PC-3 (cell line): ENCODE measurements at regions of chrX and their contacts with region 1.

Region 1: DNA sequence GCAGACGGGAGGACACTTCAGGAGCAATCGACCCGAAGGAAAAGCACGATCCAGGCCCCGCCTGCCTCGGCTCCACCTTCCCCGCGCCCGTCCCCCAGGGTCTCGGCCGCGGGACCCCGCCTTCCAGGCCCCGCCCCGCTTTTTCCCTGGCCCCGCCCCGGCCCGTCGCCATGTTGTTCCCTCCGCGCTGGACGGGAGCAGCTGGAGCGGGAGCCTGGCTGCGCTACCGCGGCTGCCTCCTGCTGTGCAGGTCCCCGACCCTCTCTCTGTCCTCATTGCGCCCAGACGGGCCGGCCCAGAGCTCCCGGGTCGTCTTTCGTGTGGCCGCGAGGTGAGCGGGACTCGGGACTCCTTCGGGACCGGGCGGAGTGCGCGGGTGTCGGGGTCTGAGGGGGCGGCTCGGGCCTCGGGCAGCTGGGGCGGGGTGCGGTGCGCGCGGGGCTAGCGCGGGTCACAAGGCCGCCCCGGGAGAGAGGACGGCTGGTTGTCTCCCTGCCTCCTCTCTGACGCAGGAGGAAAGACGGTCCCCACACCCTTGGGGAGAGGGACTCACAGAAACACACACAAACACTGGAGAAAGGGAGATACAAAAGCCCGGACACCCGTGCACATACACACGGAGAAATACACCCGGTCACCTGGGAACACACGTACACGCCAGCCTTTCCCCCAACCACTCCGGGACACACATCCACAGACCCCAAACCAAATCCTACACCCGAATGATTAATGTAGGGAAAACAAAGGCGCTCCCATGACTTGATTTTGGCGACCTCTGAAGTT is at the start of gene RAB9A:
- DNase-seq: peak; percentile 76
- ATAC-seq: peak; percentile 83
- H3K4me3 ChIP-seq: peak within 1 kb of the TSS; percentile 99
- H3K27ac ChIP-seq: peak within 1 kb of the TSS; percentile 76
- H3K4me1 ChIP-seq: peaks cover 29% of the 10 kb centered on the region
- H3K27me3 ChIP-seq: no peaks in the 10 kb centered on the region
- CTCF ChIP-seq: no peak
- total RNA-seq, gene RAB9A: 21.0 and 29.5 TPM in 2 replicates

Region 2: GRCh38 chrX:13658602-13659001 is 30.5 kb before region 1 on chrX:
- CTCF ChIA-PET with region 1: no interaction called
- POLR2A ChIA-PET with region 1: no interaction called
- intact Hi-C with region 1: loop called (anchors 1 kb)
- DNase-seq: peak; percentile 75
- ATAC-seq: peak; percentile 59; the same call in 1 of the 2 replicates
- H3K4me3 ChIP-seq: peak overlapping the region; percentile 43; the same call in 1 of the 2 replicates
- H3K27ac ChIP-seq: 0 out of 2 replicates have a peak overlapping the region, but pooled peaks have one; percentile 2
- H3K4me1 ChIP-seq: peaks cover 17% of the 10 kb centered on the region
- H3K27me3 ChIP-seq: no peaks in the 10 kb centered on the region
- CTCF ChIP-seq: peak; percentile 84